ENCODE measurements at regions of chr1 and their contacts with region 1.

Region 1: DNA sequence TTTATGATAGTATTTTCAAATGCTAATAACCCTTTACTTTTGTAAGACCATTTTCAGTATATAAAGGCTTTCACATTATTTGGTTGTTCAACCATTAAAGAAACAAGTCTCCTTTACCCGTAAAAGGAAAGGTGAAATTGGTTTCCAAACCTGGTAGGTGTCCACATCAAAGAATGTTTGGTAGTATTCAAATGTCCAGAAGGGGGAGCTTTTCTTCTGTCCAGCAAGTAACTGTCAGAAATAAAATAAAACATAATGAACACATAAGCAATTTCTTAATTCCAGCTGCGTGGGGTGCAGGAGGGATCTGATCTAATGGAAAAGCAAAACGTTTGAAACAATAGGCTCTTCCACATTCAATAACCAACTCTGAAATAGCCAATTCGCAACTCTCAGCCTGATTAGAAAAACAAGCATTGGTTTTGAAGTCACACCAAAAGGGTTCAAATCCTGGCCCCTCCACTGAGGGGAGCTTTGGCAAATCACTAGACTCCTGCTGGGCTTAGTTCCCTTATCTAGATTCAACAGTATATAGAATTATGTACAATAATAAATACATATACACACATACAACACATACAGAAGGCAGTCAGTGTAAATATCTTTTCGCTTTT is 11.0 kb downstream of the YIPF1 start:
- DNase-seq: peak; percentile 49
- ATAC-seq: peak; percentile 67
- H3K4me3 ChIP-seq: no peak overlapping the region
- H3K27ac ChIP-seq: no peak overlapping the region
- H3K4me1 ChIP-seq: peaks cover 0 to 1% of the 10 kb centered on the region in 2 experiments; a peak in 1 of 4 replicates
- H3K27me3 ChIP-seq: no peaks in the 10 kb centered on the region
- CTCF ChIP-seq: peak; percentile 61 to 75 (median 70); a peak in 5 of 6 replicates
- POLR2A ChIP-seq: no peak
- RAD21 ChIP-seq: peak; percentile 73

Region 2: GRCh38 chr1:53889304-53890298 is 11.0 kb after region 1 on chr1 and contains the start of gene YIPF1:
- CTCF ChIA-PET with region 1: interaction called, 15 read pairs
- POLR2A ChIA-PET with region 1: no interaction called
- RAD21 ChIA-PET with region 1: no interaction called
- intact Hi-C with region 1: no loop called
- DNase-seq: peak; percentile 74
- ATAC-seq: peak; percentile 99
- H3K4me3 ChIP-seq: peak within 1 kb of the TSS; percentile 86 to 92
- H3K27ac ChIP-seq: peak within 1 kb of the TSS; percentile 36
- H3K4me1 ChIP-seq: peaks cover 8 to 23% of the 10 kb centered on the region in 2 experiments
- H3K27me3 ChIP-seq: no peaks in the 10 kb centered on the region
- CTCF ChIP-seq: no peak
- POLR2A ChIP-seq: no peak
- RAD21 ChIP-seq: no peak
- total RNA-seq, gene YIPF1: 16.4 TPM

Region 3: GRCh38 chr1:53929246-53929960 is 50.8 kb after region 1 on chr1:
- CTCF ChIA-PET with region 1: no interaction called
- POLR2A ChIA-PET with region 1: no interaction called
- RAD21 ChIA-PET with region 1: no interaction called
- intact Hi-C with region 1: no loop called
- DNase-seq: no peak
- ATAC-seq: no peak
- H3K4me3 ChIP-seq: no peak overlapping the region
- H3K27ac ChIP-seq: no peak overlapping the region
- H3K4me1 ChIP-seq: no peaks in the 10 kb centered on the region
- H3K27me3 ChIP-seq: no peaks in the 10 kb centered on the region
- CTCF ChIP-seq: no peak
- POLR2A ChIP-seq: no peak
- RAD21 ChIP-seq: no peak

Region 4: DNA sequence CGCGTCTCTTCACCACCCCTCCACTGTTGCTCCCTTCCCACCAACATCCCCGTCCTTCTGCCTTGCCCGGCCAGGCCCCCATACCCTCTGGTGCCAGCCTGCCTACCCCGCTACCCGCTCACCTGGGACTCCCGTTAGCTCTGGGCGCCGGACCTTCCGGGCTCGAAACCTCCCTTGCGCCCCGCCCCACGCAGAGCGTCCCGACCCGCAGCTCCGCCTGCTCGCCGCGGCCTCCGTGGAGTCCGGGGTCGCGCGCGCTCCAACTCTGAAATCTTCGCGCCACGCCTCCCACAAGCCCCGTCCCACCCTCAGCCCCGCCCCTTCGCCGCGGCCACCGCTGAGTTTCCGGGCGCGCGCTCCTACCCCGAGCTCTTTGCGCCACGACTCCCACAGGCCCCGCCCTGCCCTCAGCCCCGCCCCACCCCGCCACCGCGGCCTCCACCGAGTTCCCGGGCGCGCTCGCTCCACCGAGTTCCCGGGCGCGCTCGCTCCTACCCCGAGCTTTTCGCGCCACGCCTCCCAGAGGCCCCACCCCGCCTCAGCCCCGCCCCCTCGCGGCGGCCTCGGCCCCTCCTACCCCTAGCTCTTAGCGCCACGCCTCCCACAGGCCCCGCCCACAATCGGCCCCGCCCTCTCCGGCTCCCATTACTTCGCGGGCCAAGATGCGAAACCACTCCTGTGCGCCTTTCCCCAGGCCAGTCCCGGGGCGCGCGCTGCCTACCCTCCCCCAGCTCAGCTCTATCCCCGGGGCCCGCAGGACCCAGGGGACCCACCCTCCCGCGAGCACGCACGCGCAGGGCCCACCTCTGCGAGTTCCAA is 67.0 kb after region 1 on chr1 and contains the start of gene IFT25:
- CTCF ChIA-PET with region 1: interaction called, 22 read pairs
- POLR2A ChIA-PET with region 1: interaction called, 4 read pairs
- RAD21 ChIA-PET with region 1: no interaction called
- intact Hi-C with region 1: no loop called
- DNase-seq: peak; percentile 88
- ATAC-seq: peak; percentile 84
- H3K4me3 ChIP-seq: peak within 1 kb of the TSS; percentile 83 to 87
- H3K27ac ChIP-seq: peak within 1 kb of the TSS; percentile 73
- H3K4me1 ChIP-seq: peaks cover 10 to 30% of the 10 kb centered on the region in 2 experiments; a peak in 3 of 4 replicates
- H3K27me3 ChIP-seq: no peaks in the 10 kb centered on the region
- CTCF ChIP-seq: no peak
- POLR2A ChIP-seq: peak; percentile 60
- RAD21 ChIP-seq: no peak
- total RNA-seq, gene IFT25: 45.1 TPM

Region 5: DNA sequence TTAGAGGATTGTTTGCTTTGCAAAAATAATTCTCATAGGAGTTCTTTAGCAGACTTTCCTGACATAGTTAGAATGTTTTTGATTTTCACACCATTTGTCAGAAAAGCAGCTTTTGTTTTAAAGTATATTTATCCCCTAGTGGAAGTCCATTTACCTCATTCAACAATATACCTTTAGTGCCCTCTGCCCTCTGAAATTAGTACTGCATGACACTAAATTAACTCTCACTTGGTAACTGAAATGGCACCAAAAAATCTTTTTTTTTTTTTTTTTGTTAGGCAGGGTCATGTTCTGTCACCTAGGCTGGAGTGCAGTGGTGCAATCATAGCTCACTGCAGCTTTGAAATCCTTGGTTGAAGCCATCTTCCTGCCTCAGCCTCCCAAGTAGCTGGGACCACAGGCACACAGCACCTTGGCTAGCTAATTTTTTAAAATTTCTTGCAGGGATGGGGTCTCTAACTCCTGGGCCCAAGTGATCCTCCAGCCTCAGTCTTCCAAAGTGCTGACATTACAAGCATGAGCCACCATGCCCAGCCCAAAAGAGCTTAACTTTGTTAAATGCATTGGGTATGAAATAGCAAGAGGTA is 81.2 kb after region 1 on chr1:
- CTCF ChIA-PET with region 1: interaction called, 47 read pairs
- POLR2A ChIA-PET with region 1: no interaction called
- RAD21 ChIA-PET with region 1: no interaction called
- intact Hi-C with region 1: loop called (anchors 1 kb)
- DNase-seq: no peak
- ATAC-seq: 0 out of 2 replicates have a peak, but pooled peaks have one; percentile 31
- H3K4me3 ChIP-seq: no peak overlapping the region
- H3K27ac ChIP-seq: no peak overlapping the region
- H3K4me1 ChIP-seq: peaks cover 26 to 34% of the 10 kb centered on the region in 2 experiments
- H3K27me3 ChIP-seq: no peaks in the 10 kb centered on the region
- CTCF ChIP-seq: peak; percentile 57 to 81 (median 68)
- POLR2A ChIP-seq: no peak
- RAD21 ChIP-seq: peak; percentile 75

Region 6: GRCh38 chr1:54081306-54082270 is 203.0 kb after region 1 on chr1:
- CTCF ChIA-PET with region 1: interaction called, 9 read pairs
- POLR2A ChIA-PET with region 1: no interaction called
- RAD21 ChIA-PET with region 1: no interaction called
- intact Hi-C with region 1: loop called (anchors 2 kb)
- DNase-seq: peak; percentile 63
- ATAC-seq: peak; percentile 100
- H3K4me3 ChIP-seq: no peak overlapping the region
- H3K27ac ChIP-seq: no peak overlapping the region
- H3K4me1 ChIP-seq: peaks cover 0 to 7% of the 10 kb centered on the region in 2 experiments; a peak in 2 of 4 replicates
- H3K27me3 ChIP-seq: no peaks in the 10 kb centered on the region
- CTCF ChIP-seq: peak; percentile 77 to 97 (median 96)
- POLR2A ChIP-seq: no peak
- RAD21 ChIP-seq: peak; percentile 75

Measured in HCT116 (cell line).